ENCODE measurements at regions of chrX and their contacts with region 1.

Region 1: DNA sequence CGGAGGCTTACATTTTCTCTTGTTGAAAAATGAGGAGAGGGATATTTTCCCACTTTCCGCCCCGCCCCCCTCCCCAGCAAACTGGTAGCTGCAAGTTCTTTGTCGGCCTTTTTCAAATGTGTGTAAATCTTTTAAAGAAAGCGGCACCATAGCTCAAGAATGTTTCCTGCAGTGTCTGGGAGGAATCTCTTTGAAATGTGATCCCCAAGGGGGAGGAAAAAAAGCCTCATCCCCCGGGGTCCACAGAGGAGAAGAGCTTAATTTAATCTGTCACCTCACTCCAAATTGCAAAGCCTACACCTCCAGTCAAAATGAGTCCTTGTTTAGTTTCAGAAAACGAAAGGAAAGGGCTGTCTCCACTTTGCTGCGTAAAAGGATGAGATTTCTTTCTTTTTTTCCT is 34.8 kb downstream of the ASMT start:
- DNase-seq: no peak
- H3K4me3 ChIP-seq: no peak overlapping the region
- H3K27ac ChIP-seq: no peak overlapping the region
- H3K4me1 ChIP-seq: no peaks in the 10 kb centered on the region
- H3K27me3 ChIP-seq: no peaks in the 10 kb centered on the region
- CTCF ChIP-seq: no peak

Region 2: GRCh38 chrX:1411291-1411720 is 238.3 kb before region 1 on chrX:
- intact Hi-C with region 1: no loop called
- DNase-seq: no peak
- H3K4me3 ChIP-seq: no peak overlapping the region
- H3K27ac ChIP-seq: no peak overlapping the region
- H3K4me1 ChIP-seq: no peaks in the 10 kb centered on the region
- H3K27me3 ChIP-seq: no peaks in the 10 kb centered on the region
- CTCF ChIP-seq: no peak

Region 3: GRCh38 chrX:1824855-1825254 is 175.2 kb after region 1 on chrX:
- intact Hi-C with region 1: no loop called
- DNase-seq: no peak
- H3K4me3 ChIP-seq: no peak overlapping the region
- H3K27ac ChIP-seq: no peak overlapping the region
- H3K4me1 ChIP-seq: no peaks in the 10 kb centered on the region
- H3K27me3 ChIP-seq: no peaks in the 10 kb centered on the region
- CTCF ChIP-seq: no peak

Region 4: DNA sequence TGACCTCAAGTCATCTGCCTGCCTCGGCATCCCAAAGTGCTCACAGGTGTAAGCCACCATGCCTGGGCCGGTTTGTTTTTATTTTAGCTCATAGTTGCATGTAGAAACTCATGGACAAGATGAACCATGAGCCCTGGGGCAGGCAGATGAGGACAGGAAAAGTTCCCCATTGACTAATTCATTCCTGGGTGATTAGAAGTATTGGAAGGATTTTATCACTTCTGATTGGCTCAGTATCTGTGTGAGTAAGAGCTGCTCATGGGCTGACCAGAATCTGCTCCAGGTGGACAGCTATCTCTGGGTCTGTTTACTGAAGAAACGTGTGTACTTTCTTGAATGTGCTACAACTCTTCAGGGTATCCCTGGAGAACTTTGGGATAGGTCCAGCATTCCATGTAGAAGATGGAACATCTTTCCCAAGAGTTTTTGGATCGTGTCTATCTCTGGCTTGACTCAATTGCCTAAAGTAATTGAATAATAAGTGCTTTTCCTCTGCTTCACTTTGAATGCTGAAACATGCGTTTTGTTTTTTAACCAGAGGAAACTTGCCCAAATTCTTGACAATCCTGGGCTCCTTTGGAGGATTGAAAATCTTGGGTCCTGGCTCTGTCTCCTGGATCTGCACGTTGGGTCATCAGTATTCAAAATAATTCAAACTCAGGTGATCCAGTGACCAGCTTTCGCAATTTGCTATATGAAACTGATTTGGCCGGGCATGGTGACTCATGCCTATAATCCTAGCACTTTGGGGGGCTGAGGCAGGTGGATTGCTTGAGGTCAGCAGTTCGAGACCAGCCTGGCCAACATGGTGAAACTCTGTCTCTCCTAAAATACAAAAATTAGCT is 939.8 kb after region 1 on chrX:
- intact Hi-C with region 1: loop called (anchors 5 kb)
- DNase-seq: no peak
- H3K4me3 ChIP-seq: no peak overlapping the region
- H3K27ac ChIP-seq: no peak overlapping the region
- H3K4me1 ChIP-seq: no peaks in the 10 kb centered on the region
- H3K27me3 ChIP-seq: no peaks in the 10 kb centered on the region
- CTCF ChIP-seq: no peak

Measured in ascending aorta (tissue), 2 donors.